ENCODE measurements at regions of chr12 and their contacts with region 1.

Region 1: GRCh38 chr12:96061864-96062453 is 26.6 kb upstream of the LTA4H start:
- DNase-seq: peak; percentile 58
- H3K4me3 Mint-ChIP-seq: no peak overlapping the region
- H3K27ac Mint-ChIP-seq: no peak overlapping the region
- H3K4me1 Mint-ChIP-seq: peaks cover 27% of the 10 kb centered on the region
- H3K27me3 Mint-ChIP-seq: no peaks in the 10 kb centered on the region

Region 2: DNA sequence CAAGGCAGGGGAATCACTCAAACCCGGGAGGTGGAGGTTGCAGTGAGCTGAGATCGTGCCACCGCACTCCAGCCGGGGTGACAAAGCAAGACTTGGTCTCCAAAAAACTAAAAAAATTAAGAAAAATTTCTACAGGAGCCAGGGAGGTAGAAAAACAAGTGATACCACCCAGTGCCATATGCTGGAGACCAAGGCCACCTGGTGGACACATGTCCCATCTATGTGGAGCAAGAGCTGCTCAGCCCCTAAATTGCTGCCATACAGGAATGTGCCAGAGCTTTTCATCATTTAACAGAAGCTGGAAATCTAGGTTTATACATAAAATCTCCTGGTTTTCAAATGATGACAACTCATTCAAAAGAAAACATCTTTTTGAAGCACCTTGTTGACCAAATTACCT is 70.9 kb after region 1 on chr12:
- intact Hi-C with region 1: loop called (anchors 1 kb)
- DNase-seq: no peak
- H3K4me3 Mint-ChIP-seq: no peak overlapping the region
- H3K27ac Mint-ChIP-seq: no peak overlapping the region
- H3K4me1 Mint-ChIP-seq: peaks cover 22% of the 10 kb centered on the region
- H3K27me3 Mint-ChIP-seq: peaks cover 10% of the 10 kb centered on the region

Measured in activated T-helper 1 cell treated with anti-CD3 and anti-CD28 coated beads, Interleukin-12 subunit alpha, Interleukin-12 subunit beta, Interleukin-2, Interleukin-4 antibody, amounts not matched to agents 30 ng/mL and 10 ng/mL and 1 ng/mL, durations not matched to agents 14 hours and 24 hours and 36 hours (primary cell).